Activated naive CD8-positive, alpha-beta T cell treated with anti-CD3 and anti-CD28 coated beads, Interleukin-2, amount 10 ng/mL, durations not matched to agents 7 days and 5 days (primary cell): ENCODE measurements at regions of chr22 and their contacts with region 1.

Region 1: GRCh38 chr22:40636380-40637182 is at the start of gene MRTFA:
- DNase-seq: peak; percentile 97
- ATAC-seq: peak; percentile 97
- H3K4me3 Mint-ChIP-seq: peak within 1 kb of the TSS; percentile 94
- H3K27ac Mint-ChIP-seq: peak within 1 kb of the TSS; percentile 96
- H3K4me1 Mint-ChIP-seq: peaks cover 21% of the 10 kb centered on the region
- H3K27me3 Mint-ChIP-seq: no peaks in the 10 kb centered on the region
- total RNA-seq, gene MRTFA: 72.5 to 76.3 TPM

Region 2: DNA sequence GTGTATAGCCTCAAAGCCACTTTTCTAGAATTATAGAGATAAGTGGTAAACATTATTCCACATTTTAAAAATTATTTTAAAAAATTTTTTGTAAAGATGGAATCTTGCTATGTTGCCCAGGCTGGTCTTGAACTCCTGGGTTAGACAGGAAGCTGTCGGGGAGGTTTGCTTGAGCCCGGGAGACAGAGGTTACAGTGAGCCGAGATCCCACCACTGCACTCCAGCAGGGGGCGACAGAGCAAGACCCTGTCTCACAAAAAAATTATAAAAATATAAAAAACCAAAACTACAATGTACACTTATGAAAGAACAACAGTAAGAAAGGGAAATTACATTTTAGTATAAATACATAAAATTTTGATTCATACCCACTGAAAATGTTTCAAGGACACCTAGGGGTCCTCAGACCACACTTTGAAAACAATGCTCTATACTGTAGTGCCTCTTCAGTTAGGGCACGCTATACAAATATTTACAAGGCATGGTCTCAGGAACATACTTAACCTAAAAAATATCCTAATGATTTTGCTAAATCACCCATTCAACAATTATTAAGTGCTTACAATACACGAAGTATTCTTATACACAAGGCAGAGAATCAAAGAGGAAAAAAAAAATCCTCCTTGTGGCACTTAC is 111.2 kb before region 1 on chr22:
- POLR2A ChIA-PET with region 1: interaction called, 10 read pairs
- DNase-seq: peak; percentile 75
- ATAC-seq: peak; percentile 82
- H3K4me3 Mint-ChIP-seq: no peak overlapping the region
- H3K27ac Mint-ChIP-seq: no peak overlapping the region
- H3K4me1 Mint-ChIP-seq: peaks cover 23% of the 10 kb centered on the region
- H3K27me3 Mint-ChIP-seq: no peaks in the 10 kb centered on the region

Region 3: DNA sequence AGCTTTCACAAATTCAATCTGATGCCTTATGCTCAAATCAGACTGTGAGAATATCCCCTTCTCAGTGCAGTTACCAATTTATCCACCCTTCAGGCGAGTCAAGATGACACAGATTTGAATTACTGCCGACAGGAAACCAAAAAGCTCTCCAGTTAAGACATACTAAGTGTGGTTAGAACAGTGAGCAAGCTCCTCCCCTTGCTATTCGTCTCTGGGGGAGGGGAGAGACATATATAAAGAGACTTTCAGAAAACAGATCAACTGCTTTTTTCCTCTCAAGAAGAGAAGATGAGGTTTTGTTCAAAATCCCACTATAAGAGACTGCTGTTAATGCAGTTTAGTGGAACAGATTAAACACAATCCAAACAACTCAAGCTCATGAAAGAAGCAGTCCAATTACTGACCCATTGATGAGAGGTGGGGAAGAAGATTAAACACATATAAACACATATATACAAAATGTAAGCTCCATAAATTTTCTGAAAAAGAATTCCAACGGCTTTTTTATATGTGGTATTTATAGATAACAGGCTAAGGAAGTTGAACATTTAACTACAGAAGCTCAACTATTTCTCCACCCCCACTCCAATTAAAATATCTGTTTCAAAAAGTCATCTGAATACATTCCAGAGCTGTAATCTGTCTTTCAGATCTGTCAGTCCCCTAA is 102.7 kb before region 1 on chr22:
- POLR2A ChIA-PET with region 1: interaction called, 16 read pairs
- DNase-seq: no peak
- ATAC-seq: peak; percentile 96
- H3K4me3 Mint-ChIP-seq: peak overlapping the region; percentile 86
- H3K27ac Mint-ChIP-seq: peak overlapping the region; percentile 88
- H3K4me1 Mint-ChIP-seq: peaks cover 46% of the 10 kb centered on the region
- H3K27me3 Mint-ChIP-seq: no peaks in the 10 kb centered on the region

Region 4: DNA sequence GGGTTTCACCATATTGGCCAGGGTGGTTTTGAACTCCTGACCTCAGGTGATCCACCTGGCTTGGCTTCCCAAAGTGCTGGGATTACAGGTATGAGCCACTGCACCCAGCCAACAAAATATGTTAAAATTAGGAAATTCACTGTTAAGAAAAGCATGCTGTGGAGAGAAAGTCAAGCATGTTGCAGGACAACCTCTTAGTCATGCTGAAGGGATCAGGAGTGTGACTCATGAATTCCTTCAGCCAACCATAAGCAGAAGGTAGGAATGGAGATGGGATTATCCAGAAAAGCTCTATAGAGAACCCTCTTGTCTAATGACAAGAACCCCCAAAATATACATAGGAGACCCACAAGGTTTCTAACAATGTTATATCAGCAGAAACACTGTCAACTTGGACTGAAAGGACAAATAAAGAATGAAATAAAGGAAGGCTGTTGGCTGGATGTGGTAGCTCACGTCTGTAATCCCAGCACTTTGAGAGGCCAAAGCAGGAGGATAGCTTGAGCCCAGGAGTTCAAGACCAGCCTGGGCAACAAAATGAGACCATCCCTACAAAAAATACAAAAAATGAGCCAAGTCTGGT is 16.0 kb before region 1 on chr22:
- POLR2A ChIA-PET with region 1: no interaction called
- DNase-seq: no peak
- ATAC-seq: no peak
- H3K4me3 Mint-ChIP-seq: no peak overlapping the region
- H3K27ac Mint-ChIP-seq: no peak overlapping the region
- H3K4me1 Mint-ChIP-seq: peaks cover 8% of the 10 kb centered on the region
- H3K27me3 Mint-ChIP-seq: no peaks in the 10 kb centered on the region